Posterior cingulate gyrus (tissue), 11 donors: ENCODE measurements at regions of chr20 and their contacts with region 1.

Region 1: GRCh38 chr20:20083807-20084206 is 31.5 kb downstream of the CFAP61 start:
- DNase-seq: no peak

Region 2: DNA sequence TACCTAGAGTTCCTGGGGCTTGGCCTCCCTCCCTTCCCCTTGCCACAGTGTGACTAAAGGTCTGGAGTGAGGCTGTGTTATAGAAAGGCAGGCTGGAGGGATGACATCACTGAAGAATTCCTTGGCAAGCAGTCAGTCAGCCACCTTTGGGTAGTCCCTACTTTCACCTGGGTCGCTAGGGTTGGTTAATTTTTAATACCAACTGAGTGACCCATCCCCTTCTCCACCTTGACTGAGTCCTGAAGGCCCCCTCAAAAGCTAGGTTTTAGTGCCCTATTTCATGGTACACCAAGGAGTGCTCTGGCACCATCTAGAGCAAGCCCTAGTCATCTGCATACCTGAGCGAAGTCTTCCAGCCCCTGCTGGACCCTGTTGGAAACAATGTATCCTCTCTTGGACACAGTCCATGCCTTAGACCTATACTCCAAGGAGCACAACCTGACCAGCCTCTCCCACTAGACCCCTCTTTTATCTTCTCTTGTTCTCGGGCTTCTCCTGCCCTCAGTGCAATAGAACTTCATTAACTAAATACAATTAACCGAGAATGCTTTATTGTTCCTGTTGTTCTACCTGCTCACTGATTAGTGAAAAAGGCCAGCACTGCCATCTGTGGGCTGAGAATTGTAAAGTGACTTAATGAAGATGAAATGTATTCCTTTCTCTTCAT is 281.2 kb before region 1 on chr20:
- intact Hi-C with region 1: no loop called
- DNase-seq: no peak

Region 3: GRCh38 chr20:20130399-20130798 is 46.6 kb after region 1 on chr20:
- intact Hi-C with region 1: no loop called
- DNase-seq: no peak

Region 4: GRCh38 chr20:20237093-20237959 is 153.5 kb after region 1 on chr20:
- intact Hi-C with region 1: loop called (anchors 2 kb)
- DNase-seq: peak in 3 of 10 donors; percentile 47 to 75 (median 58)

Region 5: DNA sequence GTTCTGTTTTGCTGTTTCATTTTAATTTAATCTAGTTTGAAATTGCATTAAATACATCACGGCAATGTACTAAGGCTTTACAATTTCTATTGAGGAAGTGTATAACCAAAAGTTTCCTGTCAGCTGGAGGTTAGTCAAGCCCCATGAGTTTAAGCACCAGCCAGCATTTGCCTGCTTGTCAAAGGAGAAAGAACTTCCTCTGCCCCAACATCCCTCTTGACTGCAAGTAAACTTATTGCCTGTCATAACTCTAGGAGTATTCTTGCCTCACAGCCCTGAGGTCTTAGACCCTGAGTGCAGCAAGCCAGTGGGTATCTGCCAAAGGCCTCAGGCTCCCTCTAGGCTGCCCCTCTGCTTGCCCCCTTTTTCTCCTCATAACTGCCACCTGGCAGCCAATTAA is 177.4 kb after region 1 on chr20:
- intact Hi-C with region 1: no loop called
- DNase-seq: no peak

Region 6: DNA sequence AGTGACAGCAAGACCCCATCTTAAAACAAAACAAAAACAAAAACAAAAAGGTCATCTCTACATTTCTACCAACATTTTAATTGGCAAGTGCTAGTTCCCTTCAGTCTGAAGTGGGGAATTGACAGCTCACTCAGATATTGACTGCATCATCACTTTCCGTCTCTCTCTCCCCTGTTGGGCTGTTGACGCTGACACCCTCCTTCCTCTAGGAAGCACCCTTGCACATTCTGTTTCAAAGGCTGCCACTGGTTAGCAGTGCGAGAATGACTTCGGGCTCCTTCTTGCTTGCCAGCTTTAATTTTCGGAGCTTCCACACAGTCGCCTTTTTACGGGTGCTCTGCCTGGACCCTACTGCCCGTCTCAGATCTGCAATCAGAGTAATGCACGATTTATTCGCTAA is 187.5 kb after region 1 on chr20:
- intact Hi-C with region 1: no loop called
- DNase-seq: no peak